ENCODE measurements at regions of chr1 and their contacts with region 1.

Region 1: GRCh38 chr1:16009030-16009709 is 5.1 kb downstream of the SRARP start:
- DNase-seq: peak; percentile 86
- ATAC-seq: peak; percentile 35
- H3K4me3 Mint-ChIP-seq: no peak overlapping the region
- H3K27ac Mint-ChIP-seq: no peak overlapping the region
- H3K4me1 Mint-ChIP-seq: peaks cover 10% of the 10 kb centered on the region
- H3K27me3 Mint-ChIP-seq: no peaks in the 10 kb centered on the region

Region 2: GRCh38 chr1:15736038-15736889 is 272.9 kb before region 1 on chr1 and contains the start of gene SLC25A34:
- CTCF ChIA-PET with region 1: no interaction called
- POLR2A ChIA-PET with region 1: no interaction called
- intact Hi-C with region 1: no loop called
- DNase-seq: no peak
- ATAC-seq: peak; percentile 12
- H3K4me3 Mint-ChIP-seq: no peak within 1 kb of the TSS
- H3K27ac Mint-ChIP-seq: no peak within 1 kb of the TSS
- H3K4me1 Mint-ChIP-seq: peaks cover under 1% of the 10 kb centered on the region
- H3K27me3 Mint-ChIP-seq: no peaks in the 10 kb centered on the region
- total RNA-seq, gene SLC25A34: 0.82 to 0.86 TPM

Region 3: DNA sequence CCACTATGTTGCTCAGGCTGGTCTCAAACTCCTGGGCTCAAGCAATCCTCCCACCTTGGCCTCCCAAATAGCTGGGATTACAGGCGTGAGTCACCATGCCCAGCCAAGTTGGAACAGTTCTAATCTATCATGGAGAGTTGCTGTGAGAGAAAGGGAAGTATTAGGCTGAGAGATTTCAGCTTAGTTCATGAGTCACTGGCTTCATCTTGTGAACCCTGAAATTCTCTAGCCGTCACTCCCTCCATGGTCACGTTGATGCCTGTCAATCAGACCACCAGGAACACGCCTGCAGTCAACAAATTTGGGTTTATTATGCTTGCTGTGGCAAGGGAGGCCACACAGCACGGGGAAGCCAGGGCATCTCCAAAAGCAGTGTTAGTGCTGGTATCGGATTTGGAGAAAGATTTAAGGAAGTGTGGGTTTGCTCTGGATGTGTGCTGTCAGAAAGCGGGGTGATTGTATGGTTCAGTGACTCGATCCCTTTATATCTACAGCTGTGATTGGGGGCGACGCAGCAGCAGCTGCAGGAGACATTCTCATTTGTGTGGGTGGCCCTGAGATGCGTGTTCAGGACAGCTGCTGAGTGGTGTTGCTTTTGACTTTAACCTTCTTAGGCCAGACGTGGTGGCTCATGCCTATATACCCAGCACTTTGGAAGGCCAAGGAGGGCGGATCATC is 220.4 kb before region 1 on chr1:
- CTCF ChIA-PET with region 1: interaction called, 17 read pairs
- POLR2A ChIA-PET with region 1: no interaction called
- intact Hi-C with region 1: loop called in 1 of 2 experiments (anchors 1 kb)
- DNase-seq: no peak
- ATAC-seq: no peak
- H3K4me3 Mint-ChIP-seq: no peak overlapping the region
- H3K27ac Mint-ChIP-seq: no peak overlapping the region
- H3K4me1 Mint-ChIP-seq: peaks cover 1% of the 10 kb centered on the region
- H3K27me3 Mint-ChIP-seq: peaks cover 6% of the 10 kb centered on the region

Region 4: DNA sequence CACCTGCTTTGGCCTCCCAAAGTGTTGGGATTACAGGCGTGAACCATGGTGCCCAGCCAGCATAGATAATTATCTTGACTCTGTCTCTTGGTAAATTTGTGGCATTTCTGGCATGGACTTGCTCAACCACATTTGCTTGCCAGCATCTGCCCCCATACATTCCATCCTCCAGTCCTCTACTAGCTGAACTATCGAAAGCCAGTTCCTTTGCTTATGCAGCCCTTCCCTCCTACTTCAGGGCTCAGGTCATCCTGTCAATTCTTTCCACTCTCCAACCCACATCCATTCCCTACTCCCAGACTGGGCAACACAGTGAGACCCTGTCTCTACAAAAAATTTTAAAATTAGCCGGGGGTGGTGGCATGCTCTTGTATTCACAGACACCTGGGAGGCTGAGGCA is 188.7 kb before region 1 on chr1:
- CTCF ChIA-PET with region 1: interaction called, 3 read pairs
- POLR2A ChIA-PET with region 1: no interaction called
- intact Hi-C with region 1: loop called (anchors 2 to 5 kb)
- DNase-seq: no peak
- ATAC-seq: no peak
- H3K4me3 Mint-ChIP-seq: no peak overlapping the region
- H3K27ac Mint-ChIP-seq: no peak overlapping the region
- H3K4me1 Mint-ChIP-seq: peaks cover 6% of the 10 kb centered on the region
- H3K27me3 Mint-ChIP-seq: no peaks in the 10 kb centered on the region

Region 5: DNA sequence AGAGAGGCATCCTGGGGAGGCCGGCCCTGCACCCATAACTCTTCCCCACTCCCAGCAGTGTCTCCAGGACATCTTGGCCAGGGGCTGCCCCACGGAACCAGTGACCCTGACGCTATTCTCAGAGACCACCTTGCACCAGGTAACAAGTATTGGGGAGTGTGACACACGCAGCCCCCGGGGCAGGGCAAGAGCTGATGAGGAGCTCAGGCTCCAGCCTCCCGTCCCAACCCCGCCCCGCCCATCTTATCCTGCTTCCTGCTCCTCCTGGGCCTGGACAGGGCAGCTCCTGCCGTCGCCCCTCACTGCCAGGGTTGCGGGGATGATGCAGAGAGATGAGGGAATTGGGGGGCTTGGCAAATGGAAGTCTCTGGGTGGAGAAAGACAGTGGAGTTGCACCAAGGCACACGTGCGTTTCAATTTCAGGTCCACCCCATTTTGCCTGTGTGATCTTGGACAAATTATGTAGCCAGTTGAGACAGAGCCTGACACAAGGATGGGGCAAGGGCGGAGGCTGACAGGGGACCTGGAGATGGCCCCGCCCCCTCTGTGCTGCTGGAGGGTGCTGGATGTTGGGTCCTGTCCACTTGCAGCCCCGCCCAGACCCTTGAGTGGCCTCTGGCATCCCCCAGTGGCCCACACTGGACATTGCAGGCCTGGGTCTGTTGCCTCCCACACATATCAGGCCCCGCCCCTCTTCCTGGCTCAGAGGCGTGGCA is 23.4 kb after region 1 on chr1:
- CTCF ChIA-PET with region 1: interaction called, 4 read pairs
- POLR2A ChIA-PET with region 1: no interaction called
- intact Hi-C with region 1: loop called (anchors 1 to 2 kb)
- DNase-seq: peak; percentile 82
- ATAC-seq: peak; percentile 95
- H3K4me3 Mint-ChIP-seq: no peak overlapping the region
- H3K27ac Mint-ChIP-seq: no peak overlapping the region
- H3K4me1 Mint-ChIP-seq: peaks cover 2% of the 10 kb centered on the region
- H3K27me3 Mint-ChIP-seq: peaks cover 12% of the 10 kb centered on the region

Region 6: GRCh38 chr1:16073490-16074119 is 64.4 kb after region 1 on chr1 and contains the start of gene FAM131C:
- CTCF ChIA-PET with region 1: interaction called, 5 read pairs
- POLR2A ChIA-PET with region 1: no interaction called
- intact Hi-C with region 1: loop called in 1 of 2 experiments (anchors 1 kb)
- DNase-seq: peak; percentile 68
- ATAC-seq: peak; percentile 93
- H3K4me3 Mint-ChIP-seq: peak within 1 kb of the TSS; percentile 52
- H3K27ac Mint-ChIP-seq: peak within 1 kb of the TSS; percentile 15
- H3K4me1 Mint-ChIP-seq: peaks cover 11% of the 10 kb centered on the region
- H3K27me3 Mint-ChIP-seq: peaks cover 14% of the 10 kb centered on the region
- total RNA-seq, gene FAM131C: 0.09 to 0.23 TPM

Region 7: DNA sequence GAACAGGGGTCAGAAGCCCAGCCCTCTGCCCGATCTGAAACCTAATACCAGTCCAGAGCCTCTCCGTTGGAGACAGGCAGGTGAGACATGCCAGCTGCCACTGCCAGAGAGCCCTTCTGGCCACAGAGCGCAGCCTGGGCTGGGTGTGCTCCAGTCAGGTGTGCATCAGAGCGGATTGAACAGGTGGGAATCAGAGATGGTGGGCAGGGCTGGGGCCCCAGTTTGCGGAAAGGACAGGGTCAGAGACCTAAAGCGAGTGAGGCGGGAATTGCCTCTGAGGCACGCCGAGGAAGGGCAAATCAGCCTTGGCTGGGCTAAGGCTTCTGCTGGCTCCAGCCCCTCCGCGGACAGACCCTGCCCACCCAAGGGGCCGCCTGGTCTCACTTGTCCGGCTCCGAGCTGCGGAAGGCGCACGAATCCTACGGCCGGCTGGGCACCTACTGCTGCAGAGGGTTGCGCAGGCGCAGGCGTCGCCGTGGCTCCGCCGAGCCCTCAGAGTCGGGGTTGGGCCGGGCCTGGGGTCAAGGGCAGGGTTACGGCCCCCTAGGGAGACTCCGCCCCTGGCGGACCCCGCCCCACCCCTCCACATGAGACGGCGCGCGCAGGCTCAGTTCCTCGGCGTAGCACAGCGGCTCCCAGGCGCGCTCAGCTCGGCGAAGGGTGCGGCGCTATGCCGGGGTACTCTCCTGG is 217.5 kb after region 1 on chr1:
- CTCF ChIA-PET with region 1: no interaction called
- POLR2A ChIA-PET with region 1: no interaction called
- intact Hi-C with region 1: no loop called
- DNase-seq: no peak
- ATAC-seq: peak; percentile 51
- H3K4me3 Mint-ChIP-seq: no peak overlapping the region
- H3K27ac Mint-ChIP-seq: no peak overlapping the region
- H3K4me1 Mint-ChIP-seq: peaks cover 6% of the 10 kb centered on the region
- H3K27me3 Mint-ChIP-seq: peaks cover 30% of the 10 kb centered on the region

Region 8: GRCh38 chr1:16236511-16237342 is 227.6 kb after region 1 on chr1 and contains the start of gene CPLANE2:
- CTCF ChIA-PET with region 1: no interaction called
- POLR2A ChIA-PET with region 1: no interaction called
- intact Hi-C with region 1: loop called in 1 of 2 experiments (anchors 5 kb)
- DNase-seq: peak; percentile 98
- ATAC-seq: peak; percentile 85
- H3K4me3 Mint-ChIP-seq: peak within 1 kb of the TSS; percentile 81
- H3K27ac Mint-ChIP-seq: peak within 1 kb of the TSS; percentile 85
- H3K4me1 Mint-ChIP-seq: peaks cover 23% of the 10 kb centered on the region
- H3K27me3 Mint-ChIP-seq: no peaks in the 10 kb centered on the region
- total RNA-seq, gene CPLANE2: 2.4 to 3.7 TPM